ENCODE measurements at regions of chr18 and their contacts with region 1.

Region 1: DNA sequence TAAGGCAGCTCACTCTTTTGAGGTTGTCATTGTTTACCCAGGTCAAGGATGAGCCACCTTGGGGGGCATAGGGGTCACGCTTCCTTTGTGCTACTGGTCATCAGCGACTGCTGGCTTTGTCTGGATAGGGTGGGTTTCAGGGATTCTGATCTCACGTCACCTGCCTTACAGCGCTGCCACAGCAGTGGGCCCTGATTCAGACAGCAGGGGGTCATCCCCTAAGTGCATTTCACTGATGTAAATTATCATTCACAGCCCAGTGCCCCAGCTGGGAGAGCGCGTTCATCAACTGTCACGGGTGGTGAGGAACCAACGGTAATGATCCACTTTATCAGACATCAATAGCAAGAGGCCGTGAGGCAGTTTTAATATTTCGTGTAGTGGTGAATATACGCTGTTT is 291.2 kb downstream of the NEDD4L start:
- DNase-seq: no peak
- ATAC-seq: no peak
- H3K4me3 ChIP-seq: no peak overlapping the region
- H3K27ac ChIP-seq: no peak overlapping the region
- H3K4me1 ChIP-seq: no peaks in the 10 kb centered on the region
- H3K27me3 ChIP-seq: no peaks in the 10 kb centered on the region
- CTCF ChIP-seq: no peak

Region 2: DNA sequence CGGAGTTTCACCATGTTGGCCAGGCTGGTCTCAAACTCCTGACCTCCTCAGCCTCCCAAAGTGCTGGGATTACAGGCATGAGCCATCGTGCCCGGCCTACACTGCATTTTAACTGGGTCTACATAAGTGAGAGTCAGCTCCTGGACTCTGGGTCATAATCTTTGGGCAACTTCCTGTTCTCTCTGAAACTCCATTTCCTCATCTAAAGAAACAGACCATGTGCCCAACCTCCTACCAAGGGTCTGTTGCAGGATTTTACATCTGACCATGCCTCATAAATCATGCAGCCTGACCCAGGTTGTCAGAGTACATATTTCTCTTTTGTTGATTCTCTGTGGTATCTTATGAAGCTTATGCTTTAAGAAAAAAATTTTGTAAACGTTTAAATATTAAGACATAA is 13.3 kb after region 1 on chr18:
- CTCF ChIA-PET with region 1: no interaction called
- POLR2A ChIA-PET with region 1: interaction called, 21 read pairs
- in situ Hi-C with region 1: no loop called
- intact Hi-C with region 1: no loop called
- DNase-seq: no peak
- ATAC-seq: no peak
- H3K4me3 ChIP-seq: no peak overlapping the region
- H3K27ac ChIP-seq: no peak overlapping the region
- H3K4me1 ChIP-seq: no peaks in the 10 kb centered on the region
- H3K27me3 ChIP-seq: no peaks in the 10 kb centered on the region
- CTCF ChIP-seq: no peak